MCF 10A (cell line): ENCODE measurements at regions of chr22 and their contacts with region 1.

Region 1: DNA sequence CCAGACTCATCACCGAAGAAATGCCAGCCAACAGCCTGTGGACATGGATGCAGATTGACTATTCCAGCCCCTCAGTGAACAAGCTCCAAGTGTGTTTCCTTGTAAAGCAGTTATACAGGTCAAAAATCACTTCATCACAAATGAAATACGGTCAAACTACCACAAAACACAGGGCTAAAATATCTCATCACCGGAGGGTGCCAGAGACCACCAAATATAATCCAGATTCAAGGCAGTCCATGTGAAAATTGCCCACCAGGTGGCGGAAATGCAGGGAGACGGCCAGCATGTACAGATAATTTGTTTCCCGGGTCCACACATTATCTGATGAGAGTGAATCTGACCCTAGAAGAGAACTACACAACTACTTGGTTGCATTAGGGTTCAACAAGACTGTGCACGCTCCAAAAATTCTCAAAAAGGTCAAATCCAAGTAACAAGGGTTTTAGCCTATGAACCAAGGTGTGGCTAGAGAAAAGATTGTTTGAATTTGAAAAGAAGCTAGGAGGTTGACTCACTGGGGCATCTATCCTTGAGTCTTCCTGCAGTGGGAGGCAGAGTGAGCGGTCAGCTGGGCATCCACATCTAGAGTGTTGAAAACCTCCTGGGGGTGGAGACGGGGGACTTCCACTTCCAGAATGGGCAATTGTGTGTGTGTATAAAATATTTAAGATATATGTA is 71.7 kb downstream of the IGLL5 start:
- DNase-seq: peak; percentile 85
- H3K4me3 Mint-ChIP-seq: no peak overlapping the region
- H3K27ac Mint-ChIP-seq: no peak overlapping the region
- H3K4me1 Mint-ChIP-seq: no peaks in the 10 kb centered on the region
- H3K27me3 Mint-ChIP-seq: peaks cover 33% of the 10 kb centered on the region
- CTCF ChIP-seq: peak; percentile 96

Region 2: GRCh38 chr22:22593964-22594656 is 365.2 kb before region 1 on chr22:
- CTCF ChIA-PET with region 1: interaction called, 73 read pairs
- POLR2A ChIA-PET with region 1: no interaction called
- intact Hi-C with region 1: loop called (anchors 10 kb)
- DNase-seq: peak; percentile 53
- H3K4me3 Mint-ChIP-seq: no peak overlapping the region
- H3K27ac Mint-ChIP-seq: no peak overlapping the region
- H3K4me1 Mint-ChIP-seq: no peaks in the 10 kb centered on the region
- H3K27me3 Mint-ChIP-seq: peaks cover 61% of the 10 kb centered on the region
- CTCF ChIP-seq: peak; percentile 73

Region 3: DNA sequence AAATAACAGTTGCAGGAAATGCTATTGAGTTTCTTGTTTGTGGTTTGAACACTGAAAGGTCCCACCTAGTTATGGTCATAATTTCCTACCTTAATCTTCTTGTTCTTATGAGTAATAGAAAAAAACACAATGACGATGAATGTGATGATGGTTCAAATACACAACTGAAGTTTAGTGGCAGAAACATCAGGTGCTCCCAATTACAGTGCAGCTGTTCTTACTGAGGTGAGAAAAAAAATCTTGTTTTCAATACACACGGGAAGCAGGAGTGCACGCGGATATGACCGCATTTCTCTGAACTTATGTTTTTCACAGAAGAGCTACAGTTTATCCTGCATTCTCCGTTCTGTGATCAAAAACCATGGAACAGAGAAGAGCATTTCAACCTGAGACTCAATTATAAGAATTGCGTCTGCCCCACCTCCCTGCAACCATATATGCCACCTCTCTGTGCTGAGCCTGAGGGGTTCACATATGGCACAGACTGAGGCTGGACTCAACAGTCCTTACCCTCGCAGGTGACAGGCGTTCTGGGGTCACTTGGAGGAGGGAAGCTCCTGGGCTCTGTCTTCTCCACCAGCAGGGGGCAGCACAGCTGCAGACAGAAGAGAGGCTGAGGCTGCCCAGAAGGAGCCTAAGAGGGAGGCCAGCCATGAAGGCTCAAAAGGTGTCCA is 171.4 kb before region 1 on chr22:
- CTCF ChIA-PET with region 1: interaction called, 4 read pairs
- POLR2A ChIA-PET with region 1: no interaction called
- intact Hi-C with region 1: loop called (anchors 5 kb)
- DNase-seq: peak; percentile 68
- H3K4me3 Mint-ChIP-seq: no peak overlapping the region
- H3K27ac Mint-ChIP-seq: no peak overlapping the region
- H3K4me1 Mint-ChIP-seq: no peaks in the 10 kb centered on the region
- H3K27me3 Mint-ChIP-seq: peaks cover 28% of the 10 kb centered on the region
- CTCF ChIP-seq: peak; percentile 79

Region 4: DNA sequence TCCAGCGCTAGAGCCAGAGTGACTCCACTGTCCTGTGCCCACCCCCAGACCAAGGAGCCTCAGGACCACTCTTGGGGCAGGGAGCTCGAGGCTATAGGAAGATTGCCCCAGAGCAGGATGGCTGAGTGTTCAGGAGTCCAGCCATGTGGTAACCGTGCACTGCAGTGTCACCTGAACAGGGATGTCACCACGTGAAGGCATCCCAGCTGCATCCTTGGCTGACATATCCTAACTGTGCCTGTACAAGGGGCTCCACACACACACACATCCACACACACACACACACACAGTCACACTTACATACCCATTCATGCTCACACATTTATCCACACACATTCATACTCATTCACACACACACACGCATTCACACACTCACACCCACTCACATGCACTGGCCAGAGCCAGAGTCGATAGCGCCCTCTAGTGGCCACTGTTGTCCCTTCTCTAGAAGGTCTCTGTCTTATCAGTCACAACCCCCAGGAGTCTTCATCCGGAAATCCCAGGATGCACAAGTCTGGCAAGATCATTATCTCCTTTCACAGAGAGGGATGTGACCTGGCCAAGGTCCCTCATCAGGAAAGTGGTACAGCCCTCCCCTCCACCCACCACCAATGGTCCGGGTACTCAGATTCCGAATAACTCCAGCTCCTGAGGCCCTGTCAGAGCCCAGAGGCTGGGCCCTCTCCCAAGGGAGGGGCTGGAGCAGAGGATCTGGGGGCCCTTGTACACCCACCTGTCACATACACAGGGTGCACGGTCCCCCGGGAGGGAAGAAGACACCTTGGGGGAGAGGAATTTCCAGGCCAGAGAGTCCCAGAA is 16.6 kb before region 1 on chr22:
- CTCF ChIA-PET with region 1: interaction called, 39 read pairs
- POLR2A ChIA-PET with region 1: no interaction called
- intact Hi-C with region 1: no loop called
- DNase-seq: peak; percentile 64
- H3K4me3 Mint-ChIP-seq: no peak overlapping the region
- H3K27ac Mint-ChIP-seq: no peak overlapping the region
- H3K4me1 Mint-ChIP-seq: no peaks in the 10 kb centered on the region
- H3K27me3 Mint-ChIP-seq: peaks cover 47% of the 10 kb centered on the region
- CTCF ChIP-seq: peak; percentile 75

Region 5: DNA sequence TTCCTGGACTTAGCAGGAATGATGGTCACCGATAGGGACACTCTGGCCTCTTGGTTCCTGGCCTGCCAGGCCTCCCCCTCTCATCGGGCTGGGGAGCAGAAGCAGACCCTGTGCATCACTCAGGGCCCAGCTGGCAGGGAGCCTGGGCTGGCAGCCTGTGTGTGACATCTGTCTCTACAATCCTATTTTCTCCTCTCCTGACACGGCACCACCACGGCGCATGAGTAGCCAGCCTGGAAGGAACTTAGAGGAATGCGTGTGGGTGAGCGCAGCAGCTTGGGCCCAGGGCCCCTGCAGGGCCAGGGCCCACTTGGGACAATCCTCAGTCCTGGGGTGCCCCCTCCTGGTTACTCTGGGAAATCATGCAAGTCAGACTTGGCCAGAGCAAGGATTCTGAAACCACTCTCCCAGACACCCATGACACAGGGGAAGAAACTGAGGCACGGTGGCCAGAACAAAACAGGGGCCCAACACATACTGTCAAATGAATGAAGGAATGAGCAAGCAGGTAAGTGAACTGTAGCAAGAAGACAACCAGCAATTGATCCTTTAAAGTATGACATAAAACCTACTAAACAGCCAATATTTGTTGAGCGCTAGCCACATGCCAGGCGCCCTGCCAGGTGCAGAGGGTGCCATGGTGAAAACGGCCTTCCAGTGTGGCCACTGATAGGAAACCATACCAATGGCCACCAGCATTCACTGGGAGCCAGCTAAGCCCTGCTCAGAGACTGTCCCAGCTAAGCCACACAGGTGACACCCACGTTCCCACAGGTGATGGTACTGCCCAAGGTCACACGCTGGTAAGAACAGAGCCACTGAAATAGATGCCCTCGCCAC is 169.2 kb after region 1 on chr22:
- CTCF ChIA-PET with region 1: interaction called, 160 read pairs
- POLR2A ChIA-PET with region 1: interaction called, 4 read pairs
- intact Hi-C with region 1: loop called (anchors 1 kb)
- DNase-seq: peak; percentile 68
- H3K4me3 Mint-ChIP-seq: no peak overlapping the region
- H3K27ac Mint-ChIP-seq: no peak overlapping the region
- H3K4me1 Mint-ChIP-seq: no peaks in the 10 kb centered on the region
- H3K27me3 Mint-ChIP-seq: peaks cover 20% of the 10 kb centered on the region
- CTCF ChIP-seq: peak; percentile 80

Region 6: DNA sequence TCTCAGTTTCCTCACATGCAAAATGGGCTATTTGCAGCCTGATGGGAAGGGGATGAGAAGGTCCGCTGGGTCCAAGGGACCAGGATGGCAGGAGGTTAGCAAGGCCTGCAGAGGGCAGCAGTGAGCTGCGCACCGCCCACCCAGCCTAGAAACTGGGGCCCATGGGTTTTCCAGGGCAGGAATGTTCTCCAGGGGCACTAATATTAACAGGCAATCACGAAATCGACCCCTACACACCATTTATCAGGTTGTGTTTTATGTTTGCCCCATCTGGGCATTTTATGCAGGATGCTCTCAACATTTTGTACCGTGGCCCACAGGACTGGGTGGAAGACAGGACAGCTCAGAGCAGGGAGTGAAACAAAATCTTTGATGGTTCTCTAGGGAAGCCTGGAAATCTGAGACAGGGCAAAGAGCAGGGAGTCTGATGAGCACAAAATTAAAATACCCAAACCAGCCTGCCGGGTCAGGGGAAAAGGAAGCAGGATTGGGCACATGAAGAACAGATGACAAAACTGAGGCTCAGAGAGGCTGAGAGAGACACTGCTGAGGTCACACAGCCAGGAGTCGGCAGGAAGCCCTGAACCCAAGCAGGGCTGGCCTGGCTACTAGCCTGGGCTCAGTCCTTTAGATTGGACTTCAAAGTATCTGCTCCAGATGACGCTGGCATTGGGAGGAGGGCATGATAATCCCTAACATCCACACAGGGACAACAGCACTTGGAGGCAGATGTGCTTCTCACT is 219.4 kb after region 1 on chr22:
- CTCF ChIA-PET with region 1: interaction called, 12 read pairs
- POLR2A ChIA-PET with region 1: no interaction called
- intact Hi-C with region 1: loop called (anchors 1 kb)
- DNase-seq: peak; percentile 64
- H3K4me3 Mint-ChIP-seq: peak overlapping the region; percentile 13
- H3K27ac Mint-ChIP-seq: peak overlapping the region; percentile 78
- H3K4me1 Mint-ChIP-seq: peaks cover 40% of the 10 kb centered on the region
- H3K27me3 Mint-ChIP-seq: no peaks in the 10 kb centered on the region
- CTCF ChIP-seq: peak; percentile 98

Region 7: GRCh38 chr22:23539135-23539838 is 580.0 kb after region 1 on chr22:
- CTCF ChIA-PET with region 1: no interaction called
- POLR2A ChIA-PET with region 1: no interaction called
- intact Hi-C with region 1: loop called (anchors 2 kb)
- DNase-seq: peak; percentile 82
- H3K4me3 Mint-ChIP-seq: peak overlapping the region; percentile 16
- H3K27ac Mint-ChIP-seq: no peak overlapping the region
- H3K4me1 Mint-ChIP-seq: peaks cover 7% of the 10 kb centered on the region
- H3K27me3 Mint-ChIP-seq: peaks cover 11% of the 10 kb centered on the region
- CTCF ChIP-seq: peak; percentile 75